CD8-positive, alpha-beta memory T cell (primary cell): ENCODE measurements at regions of chr9 and their contacts with region 1.

Region 1: DNA sequence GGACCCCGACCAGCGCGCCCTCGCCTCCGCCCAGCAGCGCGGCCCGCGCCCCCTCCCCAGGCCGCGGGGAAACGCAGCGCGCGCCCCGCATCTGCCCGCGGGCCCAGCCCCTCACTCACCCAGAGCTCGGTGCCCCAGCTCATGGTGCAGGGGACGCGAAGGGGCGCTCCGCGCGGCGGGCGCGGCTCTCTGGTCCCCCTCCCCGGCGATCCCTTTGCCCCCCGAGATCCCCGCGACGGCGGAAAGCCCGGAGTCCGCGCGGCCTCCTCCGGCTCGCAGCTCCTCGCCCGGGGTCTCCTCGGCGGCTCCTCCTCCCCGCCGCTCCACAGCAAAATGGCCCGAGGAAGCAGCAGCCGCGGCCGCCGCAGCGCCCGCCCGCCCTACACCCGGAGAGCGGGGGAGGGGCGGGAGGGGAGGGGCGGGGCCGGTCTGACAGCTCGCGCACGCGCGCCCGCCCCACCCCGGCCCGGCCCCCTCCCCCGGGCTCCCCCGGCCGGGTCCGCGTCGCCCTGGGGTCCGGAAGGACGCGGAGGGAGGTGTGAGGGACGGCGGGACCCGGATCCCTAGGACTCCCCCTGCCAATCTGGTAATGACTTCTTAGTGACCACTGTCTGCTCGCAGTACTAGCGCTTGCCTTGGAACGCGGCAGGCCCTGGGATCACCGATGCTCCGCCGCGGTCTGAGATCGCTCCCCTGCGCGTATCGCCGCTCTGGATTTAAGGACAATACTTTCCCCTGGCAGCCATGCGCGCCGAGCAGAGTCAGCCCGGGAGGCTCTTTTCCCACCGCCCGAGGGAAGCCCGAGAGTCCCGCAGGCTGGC is at the start of gene FNBP1:
- DNase-seq: peak; percentile 72 to 85 (median 81)
- H3K4me3 ChIP-seq: peak within 1 kb of the TSS; percentile 94
- H3K4me3 Mint-ChIP-seq: peak within 1 kb of the TSS; percentile 94 to 100 (median 99)
- H3K27ac ChIP-seq: peak within 1 kb of the TSS; percentile 86
- H3K27ac Mint-ChIP-seq: peak within 1 kb of the TSS; percentile 95 to 99 (median 99)
- H3K4me1 ChIP-seq: peaks cover 37% of the 10 kb centered on the region
- H3K4me1 Mint-ChIP-seq: peaks cover 54 to 66% (median 55%) of the 10 kb centered on the region in 3 donors
- H3K27me3 ChIP-seq: no peaks in the 10 kb centered on the region
- H3K27me3 Mint-ChIP-seq: peaks cover 0 to 8% of the 10 kb centered on the region in 2 donors
- total RNA-seq, gene FNBP1: 226 to 230 TPM

Region 2: GRCh38 chr9:129884220-129885017 is 158.6 kb before region 1 on chr9:
- CTCF ChIA-PET with region 1: interaction called, 36 read pairs
- POLR2A ChIA-PET with region 1: interaction called, 29 read pairs
- DNase-seq: peak; percentile 93 to 97 (median 95)
- H3K4me3 ChIP-seq: peak overlapping the region; percentile 73
- H3K4me3 Mint-ChIP-seq: peak overlapping the region; percentile 83 to 96 (median 89)
- H3K27ac ChIP-seq: peak overlapping the region; percentile 91
- H3K27ac Mint-ChIP-seq: peak overlapping the region; percentile 97 to 100 (median 100)
- H3K4me1 ChIP-seq: peaks cover 45% of the 10 kb centered on the region
- H3K4me1 Mint-ChIP-seq: peaks cover 50 to 69% (median 59%) of the 10 kb centered on the region in 3 donors
- H3K27me3 ChIP-seq: no peaks in the 10 kb centered on the region
- H3K27me3 Mint-ChIP-seq: peaks cover 0 to 17% of the 10 kb centered on the region in 2 donors

Region 3: DNA sequence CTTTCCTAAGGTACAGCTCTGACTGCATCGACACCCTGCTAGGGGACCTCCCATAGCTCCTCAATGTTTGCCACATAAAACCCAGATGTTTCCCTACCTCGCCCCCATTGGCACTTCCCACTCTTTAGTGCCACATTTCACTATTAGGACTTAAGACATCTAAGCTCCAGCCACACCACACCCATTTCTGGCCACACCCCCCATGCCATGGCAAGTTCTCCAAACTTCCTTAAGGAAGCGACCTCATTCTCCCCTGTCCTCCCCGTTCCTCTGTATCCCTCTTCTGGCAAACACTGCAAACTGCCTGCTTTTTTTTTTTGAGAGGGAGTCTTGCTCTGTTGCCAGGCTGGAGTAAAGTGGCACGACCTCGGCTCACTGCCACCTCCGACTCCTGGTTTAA is 144.9 kb before region 1 on chr9:
- CTCF ChIA-PET with region 1: interaction called, 4 read pairs
- POLR2A ChIA-PET with region 1: interaction called, 11 read pairs
- DNase-seq: no peak
- H3K4me3 ChIP-seq: no peak overlapping the region
- H3K4me3 Mint-ChIP-seq: peak overlapping the region in 1 of 7 donors; percentile 1
- H3K27ac ChIP-seq: no peak overlapping the region
- H3K27ac Mint-ChIP-seq: peak overlapping the region; percentile 66 to 99 (median 78)
- H3K4me1 ChIP-seq: peaks cover 30% of the 10 kb centered on the region
- H3K4me1 Mint-ChIP-seq: peaks cover 31 to 48% (median 44%) of the 10 kb centered on the region in 3 donors
- H3K27me3 ChIP-seq: no peaks in the 10 kb centered on the region
- H3K27me3 Mint-ChIP-seq: peaks cover 0 to 9% of the 10 kb centered on the region in 2 donors

Region 4: GRCh38 chr9:129995409-129996160 is 47.5 kb before region 1 on chr9:
- CTCF ChIA-PET with region 1: interaction called, 11 read pairs
- POLR2A ChIA-PET with region 1: interaction called, 8 read pairs
- DNase-seq: no peak
- H3K4me3 ChIP-seq: no peak overlapping the region
- H3K4me3 Mint-ChIP-seq: peak overlapping the region; percentile 28 to 80 (median 70)
- H3K27ac ChIP-seq: peak overlapping the region; percentile 47
- H3K27ac Mint-ChIP-seq: peak overlapping the region; percentile 84 to 98 (median 92)
- H3K4me1 ChIP-seq: peaks cover 76% of the 10 kb centered on the region
- H3K4me1 Mint-ChIP-seq: peaks cover 63 to 81% (median 75%) of the 10 kb centered on the region in 3 donors
- H3K27me3 ChIP-seq: no peaks in the 10 kb centered on the region
- H3K27me3 Mint-ChIP-seq: no peaks in the 10 kb centered on the region

Region 5: GRCh38 chr9:130018260-130018659 is 24.8 kb before region 1 on chr9:
- CTCF ChIA-PET with region 1: interaction called, 12 read pairs
- POLR2A ChIA-PET with region 1: interaction called, 6 read pairs
- DNase-seq: no peak
- H3K4me3 ChIP-seq: no peak overlapping the region
- H3K4me3 Mint-ChIP-seq: no peak overlapping the region
- H3K27ac ChIP-seq: no peak overlapping the region
- H3K27ac Mint-ChIP-seq: peak overlapping the region in 7 of 8 donors; percentile 17 to 93 (median 60)
- H3K4me1 ChIP-seq: peaks cover 33% of the 10 kb centered on the region
- H3K4me1 Mint-ChIP-seq: peaks cover 70 to 86% (median 84%) of the 10 kb centered on the region in 3 donors
- H3K27me3 ChIP-seq: no peaks in the 10 kb centered on the region
- H3K27me3 Mint-ChIP-seq: no peaks in the 10 kb centered on the region

Region 6: GRCh38 chr9:130029223-130029973 is 13.6 kb before region 1 on chr9:
- CTCF ChIA-PET with region 1: interaction called, 4 read pairs
- POLR2A ChIA-PET with region 1: interaction called, 15 read pairs
- DNase-seq: no peak
- H3K4me3 ChIP-seq: no peak overlapping the region
- H3K4me3 Mint-ChIP-seq: peak overlapping the region; percentile 49 to 78 (median 68)
- H3K27ac ChIP-seq: no peak overlapping the region
- H3K27ac Mint-ChIP-seq: peak overlapping the region; percentile 71 to 99 (median 96)
- H3K4me1 ChIP-seq: peaks cover 88% of the 10 kb centered on the region
- H3K4me1 Mint-ChIP-seq: peaks cover 84 to 96% (median 94%) of the 10 kb centered on the region in 3 donors
- H3K27me3 ChIP-seq: no peaks in the 10 kb centered on the region
- H3K27me3 Mint-ChIP-seq: no peaks in the 10 kb centered on the region

Region 7: DNA sequence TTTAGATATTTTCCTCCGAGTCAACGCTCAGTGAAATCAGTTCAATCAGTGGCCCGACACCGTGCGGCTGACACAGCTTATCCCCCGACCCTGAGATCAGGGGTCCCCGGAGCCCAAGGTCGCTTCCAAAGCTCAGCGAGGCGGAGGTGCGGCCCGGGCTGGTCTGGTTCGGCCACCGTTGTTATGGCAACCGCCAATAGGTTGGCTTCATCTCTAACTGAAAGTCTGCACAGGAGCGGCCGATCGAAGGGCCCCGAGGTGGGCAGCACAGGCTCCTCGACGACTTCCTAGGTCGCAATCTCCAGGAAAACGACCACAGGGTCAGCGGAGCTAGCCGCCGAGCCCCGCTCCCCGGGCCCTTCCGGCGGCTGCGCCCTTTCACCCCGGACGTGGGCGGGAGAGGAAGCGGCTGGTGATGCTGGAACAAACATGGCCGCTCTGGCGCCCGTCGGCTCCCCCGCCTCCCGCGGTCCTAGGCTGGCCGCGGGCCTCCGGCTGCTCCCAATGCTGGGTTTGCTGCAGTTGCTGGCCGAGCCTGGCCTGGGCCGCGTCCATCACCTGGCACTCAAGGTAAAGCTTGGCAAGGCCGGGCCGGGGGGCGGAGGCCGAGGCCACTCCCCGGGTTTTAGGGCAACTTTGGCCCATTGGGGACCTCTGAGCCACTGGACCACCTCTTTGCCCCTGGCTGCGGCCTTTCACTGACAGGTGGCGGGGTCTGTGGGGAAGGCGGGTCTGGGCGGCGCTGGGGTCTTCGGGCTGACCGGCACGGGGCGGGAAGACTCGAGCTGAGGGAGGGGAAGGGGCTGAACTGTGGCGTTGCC is 10.7 kb after region 1 on chr9 and contains the start of gene GPR107:
- CTCF ChIA-PET with region 1: interaction called, 16 read pairs
- POLR2A ChIA-PET with region 1: interaction called, 13 read pairs
- DNase-seq: peak; percentile 67 to 83 (median 74)
- H3K4me3 ChIP-seq: peak within 1 kb of the TSS; percentile 99
- H3K4me3 Mint-ChIP-seq: peak within 1 kb of the TSS; percentile 90 to 99 (median 94)
- H3K27ac ChIP-seq: peak within 1 kb of the TSS; percentile 98
- H3K27ac Mint-ChIP-seq: peak within 1 kb of the TSS; percentile 91 to 100 (median 96)
- H3K4me1 ChIP-seq: peaks cover 18% of the 10 kb centered on the region
- H3K4me1 Mint-ChIP-seq: peaks cover 20 to 47% (median 43%) of the 10 kb centered on the region in 3 donors
- H3K27me3 ChIP-seq: no peaks in the 10 kb centered on the region
- H3K27me3 Mint-ChIP-seq: no peaks in the 10 kb centered on the region
- total RNA-seq, gene GPR107: 21.3 to 21.4 TPM

Region 8: GRCh38 chr9:130159915-130160670 is 117.0 kb after region 1 on chr9:
- CTCF ChIA-PET with region 1: no interaction called
- POLR2A ChIA-PET with region 1: no interaction called
- DNase-seq: no peak
- H3K4me3 ChIP-seq: no peak overlapping the region
- H3K4me3 Mint-ChIP-seq: no peak overlapping the region
- H3K27ac ChIP-seq: no peak overlapping the region
- H3K27ac Mint-ChIP-seq: no peak overlapping the region
- H3K4me1 ChIP-seq: no peaks in the 10 kb centered on the region
- H3K4me1 Mint-ChIP-seq: no peaks in the 10 kb centered on the region
- H3K27me3 ChIP-seq: no peaks in the 10 kb centered on the region
- H3K27me3 Mint-ChIP-seq: peaks cover 0 to 1% of the 10 kb centered on the region in 2 donors